ENCODE measurements at regions of chr22 and their contacts with region 1.

Region 1: DNA sequence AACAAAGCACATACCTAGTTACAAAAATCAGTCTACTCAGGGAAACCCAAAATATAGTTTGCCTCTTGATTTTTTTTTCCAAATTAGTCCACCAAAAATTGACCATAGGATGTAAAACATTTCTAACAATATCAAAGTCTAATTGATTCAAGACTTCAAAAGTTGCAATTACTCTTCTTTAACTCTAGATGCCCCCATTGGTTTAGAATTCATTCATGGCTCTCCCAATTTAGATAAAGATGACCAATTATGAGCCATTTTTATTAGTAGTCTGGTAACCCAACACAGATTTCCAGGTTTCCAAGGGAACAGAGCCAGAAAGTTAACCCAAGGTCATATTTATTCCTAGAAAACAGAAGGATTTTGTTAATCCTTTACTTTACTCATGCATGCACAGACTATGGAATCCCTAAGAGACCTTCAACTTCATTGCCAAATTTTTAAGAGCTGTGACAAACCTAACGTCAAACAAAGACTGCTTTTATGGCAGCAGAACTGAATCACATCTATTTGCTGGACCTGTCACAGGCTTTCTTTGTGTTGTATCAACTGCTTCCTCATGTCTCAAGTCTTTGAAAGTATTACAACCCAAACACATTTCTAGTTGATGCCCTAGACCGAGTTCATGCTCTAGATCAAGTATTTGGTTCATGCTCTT is 55.3 kb downstream of the C22orf42 start:
- DNase-seq: no peak
- ATAC-seq: peak in 1 of 4 donors; percentile 14
- H3K4me3 ChIP-seq: no peak overlapping the region
- H3K27ac ChIP-seq: no peak overlapping the region
- H3K4me1 ChIP-seq: peaks cover 0 to 6% (median 0%) of the 10 kb centered on the region in 12 donors
- H3K27me3 ChIP-seq: no peaks in the 10 kb centered on the region
- CTCF ChIP-seq: peak in 10 of 12 donors; percentile 17 to 54 (median 38)
- POLR2A ChIP-seq: no peak

Region 2: DNA sequence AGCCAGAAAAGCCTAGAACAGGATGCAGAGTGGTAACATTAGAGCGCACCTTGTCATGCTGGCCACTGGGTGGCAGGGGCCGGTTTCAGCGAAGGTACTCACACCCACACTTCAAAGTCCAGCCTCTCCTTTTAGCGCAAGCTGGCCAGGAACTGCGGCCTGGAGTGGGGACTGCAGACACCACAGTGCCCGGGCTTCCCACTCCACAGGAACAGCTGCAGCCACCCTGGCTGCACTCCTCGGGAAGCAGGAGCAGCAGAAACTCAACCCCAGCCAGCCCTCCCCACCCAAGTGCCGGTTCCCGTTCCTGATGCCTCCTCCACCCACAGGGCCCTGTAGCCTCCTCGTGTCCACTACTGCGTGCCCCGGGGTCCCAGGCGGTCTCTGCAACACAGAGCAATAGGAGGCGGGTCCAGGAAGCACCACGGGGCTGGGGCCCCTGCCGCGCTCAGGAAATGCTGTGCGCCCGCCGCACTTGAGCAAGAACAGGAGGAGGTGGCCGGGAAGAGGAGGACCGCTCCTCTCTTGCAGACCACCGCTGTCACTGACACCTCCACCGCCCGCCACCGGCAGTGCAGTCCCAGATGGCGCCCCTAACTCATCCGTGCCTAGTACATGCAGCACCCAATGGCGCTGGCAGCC is 98.9 kb after region 1 on chr22:
- intact Hi-C with region 1: loop called in 1 of 10 experiments (anchors 5 kb)
- DNase-seq: peak in 3 of 5 donors; percentile 33 to 57 (median 53)
- ATAC-seq: peak; percentile 63 to 77 (median 73)
- H3K4me3 ChIP-seq: peak overlapping the region in 10 of 12 donors; percentile 0 to 43 (median 27)
- H3K27ac ChIP-seq: no peak overlapping the region
- H3K4me1 ChIP-seq: peaks cover 0 to 22% (median 0%) of the 10 kb centered on the region in 12 donors
- H3K27me3 ChIP-seq: peaks cover 0 to 31% (median 13%) of the 10 kb centered on the region in 9 donors
- CTCF ChIP-seq: peak in 11 of 12 donors; percentile 23 to 56 (median 44)
- POLR2A ChIP-seq: no peak

Region 3: DNA sequence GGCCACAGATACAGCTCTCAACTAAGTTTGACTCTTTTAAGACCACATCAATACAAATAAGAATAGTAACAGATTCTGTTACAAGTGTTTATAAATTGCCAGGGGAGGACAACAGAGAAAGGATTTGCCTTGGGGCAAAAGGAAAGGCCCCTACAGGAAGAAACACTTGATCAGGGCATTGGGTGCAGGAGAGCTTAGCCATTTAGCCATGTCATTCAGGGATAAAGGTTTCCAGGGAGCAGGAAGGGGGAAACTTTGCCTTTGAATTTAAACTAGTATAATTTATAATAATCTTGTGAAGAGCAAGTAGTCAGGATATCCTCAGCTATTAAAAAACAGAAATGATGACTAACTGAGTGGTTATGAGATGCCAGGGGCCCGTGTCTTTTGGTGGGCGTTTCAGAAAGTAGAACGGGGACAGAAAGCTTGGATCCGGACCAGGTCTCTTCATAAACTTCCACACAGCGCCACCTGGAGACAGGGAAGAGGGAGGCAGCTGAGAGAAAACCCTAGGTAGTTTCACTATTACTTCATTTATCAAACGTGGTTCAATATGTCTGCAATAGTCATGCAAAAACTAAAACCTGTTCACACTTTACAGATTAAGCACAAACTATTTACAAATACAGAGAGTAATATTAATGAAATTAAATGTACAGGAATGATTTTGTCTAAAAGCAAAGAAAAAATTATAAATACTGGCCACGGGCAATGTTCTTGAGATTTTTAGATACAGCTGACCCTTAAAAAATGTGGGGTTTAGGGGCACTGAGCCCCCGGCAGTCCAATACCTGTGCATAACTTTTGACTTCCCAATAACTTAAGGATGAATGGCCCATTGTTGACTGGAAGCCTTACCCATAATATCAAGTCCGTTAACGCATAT is 162.3 kb after region 1 on chr22:
- intact Hi-C with region 1: loop called in 9 of 10 experiments (anchors 5 to 10 kb)
- DNase-seq: peak in 4 of 5 donors; percentile 56 to 73 (median 58)
- ATAC-seq: peak in 3 of 4 donors; percentile 59 to 70 (median 61)
- H3K4me3 ChIP-seq: peak overlapping the region in 2 of 12 donors; percentile 12 to 28
- H3K27ac ChIP-seq: no peak overlapping the region
- H3K4me1 ChIP-seq: peaks cover 0 to 8% (median 0%) of the 10 kb centered on the region in 12 donors
- H3K27me3 ChIP-seq: no peaks in the 10 kb centered on the region
- CTCF ChIP-seq: peak; percentile 74 to 90 (median 86)
- POLR2A ChIP-seq: no peak

Region 4: DNA sequence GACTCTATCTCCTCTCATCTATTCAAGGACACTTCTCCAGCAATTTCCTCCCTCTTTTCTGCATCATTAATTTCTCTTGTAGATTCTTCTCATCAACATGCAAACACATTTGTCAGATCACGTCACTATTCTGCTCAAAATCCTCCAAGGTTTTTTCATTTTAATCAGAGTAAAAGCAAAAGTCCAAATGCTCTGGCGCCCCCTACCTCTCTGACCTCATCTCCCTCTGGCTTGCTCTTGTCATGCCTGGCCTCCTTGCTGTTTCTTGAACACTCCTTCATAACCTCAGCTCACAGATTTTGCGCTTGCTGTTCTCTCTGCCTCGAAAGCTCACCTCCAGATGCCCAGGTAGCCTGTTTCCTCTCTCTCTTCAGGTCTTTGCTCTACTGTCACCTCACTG is 285.9 kb after region 1 on chr22:
- intact Hi-C with region 1: loop called in 1 of 10 experiments (anchors 10 kb)
- DNase-seq: no peak
- ATAC-seq: no peak
- H3K4me3 ChIP-seq: no peak overlapping the region
- H3K27ac ChIP-seq: no peak overlapping the region
- H3K4me1 ChIP-seq: no peaks in the 10 kb centered on the region
- H3K27me3 ChIP-seq: no peaks in the 10 kb centered on the region
- CTCF ChIP-seq: peak in 10 of 12 donors; percentile 10 to 53 (median 30)
- POLR2A ChIP-seq: no peak

Region 5: GRCh38 chr22:32474635-32475467 is 371.1 kb after region 1 on chr22 and contains the start of gene FBXO7:
- intact Hi-C with region 1: loop called in 1 of 10 experiments (anchors 5 kb)
- DNase-seq: peak; percentile 93 to 96 (median 95)
- ATAC-seq: peak; percentile 33 to 94 (median 92)
- H3K4me3 ChIP-seq: peak within 1 kb of the TSS; percentile 55 to 100 (median 96)
- H3K27ac ChIP-seq: peak within 1 kb of the TSS; percentile 86 to 100 (median 99)
- H3K4me1 ChIP-seq: peaks cover 8 to 37% (median 29%) of the 10 kb centered on the region in 12 donors
- H3K27me3 ChIP-seq: no peaks in the 10 kb centered on the region
- CTCF ChIP-seq: peak in 7 of 12 donors; percentile 32 to 69 (median 60)
- POLR2A ChIP-seq: peak in 1 of 2 donors; percentile 73
- total RNA-seq, gene FBXO7: 32.8 to 63.0 (median 42.5) TPM